ENCODE measurements at regions of chr6 and their contacts with region 1.

Region 1: DNA sequence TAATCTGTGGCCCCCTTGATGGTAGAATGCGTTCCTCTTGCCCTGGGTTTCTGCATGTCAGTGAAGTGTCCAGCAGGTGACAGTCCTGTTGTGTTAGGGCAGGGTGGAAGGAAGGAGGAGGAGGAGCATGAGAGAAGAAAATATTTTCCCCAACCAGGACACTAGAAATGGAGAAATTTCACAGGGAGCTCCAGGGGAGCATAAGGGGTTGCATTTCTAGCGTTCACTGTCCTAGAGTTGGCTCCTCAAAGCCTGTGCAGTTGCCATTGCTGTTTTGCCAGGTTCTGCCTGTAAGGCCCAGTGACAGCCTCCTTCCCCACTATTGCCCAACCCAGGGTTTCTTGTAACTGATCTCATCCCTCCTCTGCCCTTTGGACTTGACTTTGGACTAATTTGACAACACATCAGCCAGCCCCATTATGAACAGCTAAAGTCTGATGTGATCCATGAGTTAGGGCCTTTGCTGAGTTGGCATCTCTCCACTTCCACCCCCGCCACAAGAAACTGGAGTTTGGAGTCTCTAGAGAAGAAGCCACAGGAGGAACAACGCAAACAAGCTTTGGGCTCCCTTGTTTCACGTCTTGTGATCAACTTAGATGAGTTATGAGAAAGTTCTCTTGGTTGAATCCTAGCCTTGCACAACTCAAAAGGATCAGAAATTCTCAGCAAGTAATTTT is 14.0 kb upstream of the FAM50B start:
- DNase-seq: peak; percentile 91
- ATAC-seq: peak; percentile 57
- H3K4me3 ChIP-seq: no peak overlapping the region
- H3K27ac ChIP-seq: peak overlapping the region; percentile 67
- H3K4me1 ChIP-seq: peaks cover 55% of the 10 kb centered on the region
- H3K27me3 ChIP-seq: no peaks in the 10 kb centered on the region
- CTCF ChIP-seq: peak; percentile 75
- EP300 ChIP-seq: peak; percentile 88 to 91
- POLR2A ChIP-seq: no peak
- RAD21 ChIP-seq: peak; percentile 85

Region 2: GRCh38 chr6:3805448-3806123 is 29.6 kb before region 1 on chr6:
- CTCF ChIA-PET with region 1: no interaction called
- POLR2A ChIA-PET with region 1: interaction called, 31 read pairs
- in situ Hi-C with region 1: no loop called
- intact Hi-C with region 1: loop called (anchors 2 kb)
- DNase-seq: peak; percentile 85
- ATAC-seq: peak; percentile 57
- H3K4me3 ChIP-seq: peak overlapping the region; percentile 40 to 63 (median 44); a peak in 5 of 6 replicates
- H3K27ac ChIP-seq: peak overlapping the region; percentile 99
- H3K4me1 ChIP-seq: peaks cover 70% of the 10 kb centered on the region
- H3K27me3 ChIP-seq: no peaks in the 10 kb centered on the region
- CTCF ChIP-seq: 0 out of 2 replicates have a peak, but pooled peaks have one; percentile 5
- EP300 ChIP-seq: 0 out of 4 replicates have a peak, but pooled peaks of 1 of the 2 experiments have one; percentile 24
- POLR2A ChIP-seq: no peak
- RAD21 ChIP-seq: no peak

Region 3: GRCh38 chr6:3869632-3870527 is 34.7 kb after region 1 on chr6:
- CTCF ChIA-PET with region 1: no interaction called
- POLR2A ChIA-PET with region 1: interaction called, 21 read pairs
- in situ Hi-C with region 1: no loop called
- intact Hi-C with region 1: loop called (anchors 5 kb)
- DNase-seq: peak; percentile 92
- ATAC-seq: peak; percentile 84
- H3K4me3 ChIP-seq: peak overlapping the region; percentile 11 to 64 (median 41)
- H3K27ac ChIP-seq: peak overlapping the region; percentile 79
- H3K4me1 ChIP-seq: peaks cover 68% of the 10 kb centered on the region
- H3K27me3 ChIP-seq: no peaks in the 10 kb centered on the region
- CTCF ChIP-seq: no peak
- EP300 ChIP-seq: peak in 1 of 2 experiments; percentile 89; a peak in 2 of 4 replicates
- POLR2A ChIP-seq: peak; percentile 33 to 85; a peak in 3 of 4 replicates
- RAD21 ChIP-seq: no peak

Measured in HepG2 (cell line).